Activated CD8-positive, alpha-beta T cell treated with anti-CD3 and anti-CD28 coated beads for 36 hours (primary cell): ENCODE measurements at regions of chr7 and their contacts with region 1.

Region 1: DNA sequence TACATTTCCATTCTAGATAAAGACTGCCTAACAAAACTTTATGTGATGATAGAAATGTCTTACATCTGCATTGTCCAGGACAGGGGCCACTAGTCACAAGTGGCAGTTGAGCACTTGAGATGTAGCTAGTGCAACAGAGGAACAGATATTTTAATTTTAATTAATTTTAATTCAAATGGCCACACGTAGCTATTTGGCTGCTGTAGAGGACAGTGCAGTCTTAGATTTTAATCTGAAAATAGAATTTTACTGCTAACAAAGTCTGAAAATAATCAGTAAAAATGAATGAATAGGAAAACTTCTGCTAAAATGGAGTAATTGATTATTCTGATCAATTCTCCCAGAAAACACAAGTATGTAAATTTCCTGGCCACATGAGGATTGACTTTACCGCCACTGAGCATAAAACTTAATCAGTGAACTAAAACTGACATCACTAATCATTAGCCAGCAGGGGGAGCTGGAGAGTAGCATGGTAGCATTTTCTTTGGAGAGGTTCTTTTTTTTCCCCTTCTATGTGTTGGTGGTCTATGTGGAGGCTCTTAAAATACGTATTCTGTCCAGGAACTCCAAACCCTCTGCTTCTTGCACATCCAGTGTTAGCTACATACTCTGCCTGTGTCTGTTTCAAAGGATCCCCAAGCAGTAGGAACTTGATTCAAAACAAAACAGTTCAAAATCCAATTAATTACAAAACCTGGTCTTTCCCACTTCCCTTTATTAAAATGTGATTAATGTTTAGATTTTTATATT is 52.1 kb downstream of the TSPAN12 start:
- DNase-seq: peak; percentile 56
- ATAC-seq: peak; percentile 62
- H3K4me3 Mint-ChIP-seq: no peak overlapping the region
- H3K27ac Mint-ChIP-seq: no peak overlapping the region
- H3K4me1 Mint-ChIP-seq: no peaks in the 10 kb centered on the region
- H3K27me3 Mint-ChIP-seq: peaks cover 21% of the 10 kb centered on the region
- CTCF ChIP-seq: peak; percentile 75

Region 2: DNA sequence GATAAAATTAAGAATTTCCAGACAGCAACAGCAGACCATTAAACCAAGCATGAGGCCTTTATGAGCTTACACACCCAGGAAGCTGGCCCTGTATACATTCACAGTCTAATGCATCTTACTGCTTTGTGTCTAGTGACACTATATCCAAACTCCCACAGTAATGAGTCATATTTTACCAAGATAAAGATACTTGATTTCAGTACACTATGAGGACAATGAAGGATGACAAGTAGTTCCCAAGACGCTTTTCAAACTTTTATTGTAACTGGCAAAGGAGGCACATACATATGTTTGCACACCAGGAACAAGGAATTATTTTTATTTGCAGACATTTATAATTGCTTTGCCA is 95.9 kb before region 1 on chr7:
- CTCF ChIA-PET with region 1: no interaction called
- POLR2A ChIA-PET with region 1: no interaction called
- intact Hi-C with region 1: no loop called
- DNase-seq: no peak
- ATAC-seq: no peak
- H3K4me3 Mint-ChIP-seq: no peak overlapping the region
- H3K27ac Mint-ChIP-seq: no peak overlapping the region
- H3K4me1 Mint-ChIP-seq: no peaks in the 10 kb centered on the region
- H3K27me3 Mint-ChIP-seq: no peaks in the 10 kb centered on the region
- CTCF ChIP-seq: no peak

Region 3: DNA sequence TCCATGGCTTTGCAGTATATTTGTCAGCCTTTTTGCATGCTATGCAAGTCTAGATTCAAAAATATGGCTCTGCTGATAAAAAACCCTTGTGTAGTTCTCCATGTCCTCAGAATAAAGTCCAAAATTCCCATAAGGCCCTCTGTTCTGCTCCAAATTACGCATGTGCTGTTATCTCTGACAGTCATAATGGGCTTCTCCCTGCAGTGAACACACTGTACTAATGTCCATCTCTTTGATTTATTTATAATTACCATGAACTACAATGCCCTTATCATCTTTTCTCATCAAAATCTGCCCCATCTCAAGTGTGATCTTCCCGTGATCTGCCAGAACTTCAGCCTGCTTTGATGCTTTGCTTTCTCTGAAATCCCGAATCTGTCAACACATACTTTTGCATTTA is 35.6 kb before region 1 on chr7:
- CTCF ChIA-PET with region 1: no interaction called
- POLR2A ChIA-PET with region 1: no interaction called
- intact Hi-C with region 1: no loop called
- DNase-seq: no peak
- ATAC-seq: no peak
- H3K4me3 Mint-ChIP-seq: no peak overlapping the region
- H3K27ac Mint-ChIP-seq: no peak overlapping the region
- H3K4me1 Mint-ChIP-seq: no peaks in the 10 kb centered on the region
- H3K27me3 Mint-ChIP-seq: peaks cover 2% of the 10 kb centered on the region
- CTCF ChIP-seq: no peak

Region 4: DNA sequence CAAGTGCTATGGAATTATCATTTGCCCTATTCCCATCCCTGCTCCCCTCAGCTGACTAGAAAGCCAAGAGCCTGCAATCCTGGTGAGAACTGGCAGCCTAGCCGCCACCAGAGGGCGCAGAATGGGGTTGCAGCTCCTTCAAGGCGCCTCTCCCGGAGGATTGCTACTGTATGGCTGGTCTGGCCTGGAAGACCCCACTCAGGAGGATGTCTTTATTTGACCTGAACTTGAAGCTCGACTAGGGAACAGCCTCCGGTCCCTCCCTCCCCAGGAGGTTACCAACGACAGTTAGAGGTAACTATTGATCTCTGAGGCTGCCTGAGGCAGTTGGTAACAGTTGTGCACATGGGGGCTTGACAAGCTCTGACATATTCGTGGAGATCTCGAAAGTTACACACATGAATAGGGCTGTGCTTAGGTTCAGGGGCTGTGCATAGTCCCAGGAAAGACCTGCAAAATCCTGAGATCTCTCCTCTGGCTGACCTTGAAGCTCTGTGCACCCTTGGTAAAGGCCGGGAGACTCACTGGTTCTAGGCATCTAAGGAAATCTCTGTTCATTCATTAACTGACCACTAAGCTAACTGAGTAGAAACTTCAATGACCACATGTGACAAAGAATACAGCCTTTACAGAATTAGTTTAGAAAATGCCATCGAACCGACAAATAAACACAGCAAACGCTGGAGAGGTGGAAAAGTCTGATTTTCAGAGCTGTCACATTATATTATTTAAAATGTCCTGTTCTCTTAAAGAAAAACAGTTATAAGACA is 13.5 kb before region 1 on chr7:
- CTCF ChIA-PET with region 1: interaction called, 29 read pairs
- POLR2A ChIA-PET with region 1: no interaction called
- intact Hi-C with region 1: no loop called
- DNase-seq: peak; percentile 72
- ATAC-seq: peak; percentile 71
- H3K4me3 Mint-ChIP-seq: no peak overlapping the region
- H3K27ac Mint-ChIP-seq: no peak overlapping the region
- H3K4me1 Mint-ChIP-seq: no peaks in the 10 kb centered on the region
- H3K27me3 Mint-ChIP-seq: peaks cover 5% of the 10 kb centered on the region
- CTCF ChIP-seq: peak; percentile 89

Region 5: GRCh38 chr7:120842121-120842621 is 36.4 kb after region 1 on chr7:
- CTCF ChIA-PET with region 1: interaction called, 10 read pairs
- POLR2A ChIA-PET with region 1: no interaction called
- intact Hi-C with region 1: no loop called
- DNase-seq: no peak
- ATAC-seq: no peak
- H3K4me3 Mint-ChIP-seq: no peak overlapping the region
- H3K27ac Mint-ChIP-seq: no peak overlapping the region
- H3K4me1 Mint-ChIP-seq: no peaks in the 10 kb centered on the region
- H3K27me3 Mint-ChIP-seq: no peaks in the 10 kb centered on the region
- CTCF ChIP-seq: no peak

Region 6: DNA sequence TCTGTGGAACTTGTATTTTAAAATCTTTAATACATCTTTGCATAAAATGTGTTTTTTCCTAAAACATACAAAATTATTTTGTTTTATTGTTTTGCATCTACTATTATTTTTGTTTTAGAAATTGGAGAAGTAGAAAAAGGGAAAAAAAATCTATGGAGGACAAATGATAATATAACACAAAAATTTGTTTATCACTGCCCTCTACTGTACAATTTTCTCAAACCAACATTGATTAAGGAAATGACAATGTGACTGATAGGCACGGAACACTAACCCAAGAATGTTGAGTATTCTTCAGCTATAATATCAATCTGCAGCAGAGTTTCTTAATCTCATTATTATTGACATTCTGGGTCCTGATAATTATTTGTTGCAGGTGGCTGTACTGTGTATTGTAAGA is 135.3 kb after region 1 on chr7:
- CTCF ChIA-PET with region 1: interaction called, 8 read pairs
- POLR2A ChIA-PET with region 1: no interaction called
- intact Hi-C with region 1: loop called (anchors 5 kb)
- DNase-seq: no peak
- ATAC-seq: no peak
- H3K4me3 Mint-ChIP-seq: no peak overlapping the region
- H3K27ac Mint-ChIP-seq: no peak overlapping the region
- H3K4me1 Mint-ChIP-seq: no peaks in the 10 kb centered on the region
- H3K27me3 Mint-ChIP-seq: no peaks in the 10 kb centered on the region
- CTCF ChIP-seq: peak; percentile 37

Region 7: DNA sequence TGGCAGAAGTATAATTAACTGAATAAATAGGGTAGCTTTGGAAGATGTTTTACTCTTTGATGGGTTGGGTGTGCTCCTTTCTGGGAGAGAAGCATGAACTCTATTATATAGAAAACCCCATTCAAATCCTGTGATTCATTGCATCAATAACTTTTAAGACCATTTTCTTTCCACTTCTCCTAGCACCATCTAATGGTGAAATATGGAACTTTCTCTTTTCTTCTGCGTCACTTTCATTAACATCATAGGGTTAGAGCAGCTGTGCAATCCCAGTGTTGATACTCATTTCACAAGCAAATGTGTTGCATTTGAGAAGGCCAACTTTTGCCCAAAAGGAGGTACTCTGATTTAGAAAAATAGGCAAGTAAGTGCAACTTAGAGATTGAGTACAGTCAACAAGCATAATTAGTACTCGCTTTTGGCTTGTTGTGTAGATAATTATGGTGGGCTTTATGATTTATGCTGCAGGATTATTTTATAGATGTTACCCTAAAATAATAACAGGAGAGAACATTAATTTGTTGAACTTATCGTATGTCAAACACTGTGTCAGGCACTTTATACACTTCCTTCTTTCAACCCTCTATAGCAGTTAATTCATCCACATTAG is 275.6 kb after region 1 on chr7:
- CTCF ChIA-PET with region 1: interaction called, 6 read pairs
- POLR2A ChIA-PET with region 1: no interaction called
- intact Hi-C with region 1: loop called (anchors 1 kb)
- DNase-seq: no peak
- ATAC-seq: peak; percentile 80
- H3K4me3 Mint-ChIP-seq: no peak overlapping the region
- H3K27ac Mint-ChIP-seq: no peak overlapping the region
- H3K4me1 Mint-ChIP-seq: no peaks in the 10 kb centered on the region
- H3K27me3 Mint-ChIP-seq: peaks cover 3% of the 10 kb centered on the region
- CTCF ChIP-seq: peak; percentile 71

Region 8: GRCh38 chr7:121107923-121108498 is 302.2 kb after region 1 on chr7:
- CTCF ChIA-PET with region 1: interaction called, 4 read pairs
- POLR2A ChIA-PET with region 1: no interaction called
- intact Hi-C with region 1: loop called (anchors 5 kb)
- DNase-seq: no peak
- ATAC-seq: peak; percentile 82
- H3K4me3 Mint-ChIP-seq: no peak overlapping the region
- H3K27ac Mint-ChIP-seq: no peak overlapping the region
- H3K4me1 Mint-ChIP-seq: no peaks in the 10 kb centered on the region
- H3K27me3 Mint-ChIP-seq: peaks cover 6% of the 10 kb centered on the region
- CTCF ChIP-seq: peak; percentile 75